Pancreas (tissue), 10 donors: ENCODE measurements at regions of chr6 and their contacts with region 1.

Region 1: GRCh38 chr6:110528101-110528929 is 51.9 kb upstream of the SLC22A16 start:
- DNase-seq: peak in 3 of 6 donors; percentile 9 to 58 (median 28)
- ATAC-seq: peak; percentile 68 to 94 (median 90)
- H3K4me3 ChIP-seq: no peak overlapping the region
- H3K27ac ChIP-seq: no peak overlapping the region
- H3K4me1 ChIP-seq: no peaks in the 10 kb centered on the region
- H3K27me3 ChIP-seq: no peaks in the 10 kb centered on the region
- CTCF ChIP-seq: peak; percentile 31 to 72 (median 57)

Region 2: DNA sequence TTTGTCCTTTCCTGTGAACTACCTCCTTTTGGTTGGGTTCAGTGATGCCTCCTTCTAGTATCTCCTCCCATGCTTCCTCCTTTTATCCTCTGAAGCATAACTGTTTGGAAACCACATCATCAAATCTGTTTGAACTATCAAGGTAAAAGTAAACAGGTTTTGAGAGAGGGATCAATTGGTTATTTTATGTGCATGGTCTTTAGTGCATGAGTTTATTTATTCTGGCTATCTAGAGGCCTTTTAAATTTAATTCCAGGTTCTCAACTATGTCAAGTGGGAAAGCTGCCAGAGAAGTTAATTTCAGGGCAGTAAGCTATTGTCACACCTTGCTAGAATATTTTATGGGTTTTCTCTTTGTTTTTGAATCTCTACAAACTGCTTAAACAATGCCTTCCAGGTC is 403.0 kb before region 1 on chr6:
- intact Hi-C with region 1: no loop called
- DNase-seq: no peak
- ATAC-seq: peak in 2 of 4 donors; percentile 9 to 36
- H3K4me3 ChIP-seq: no peak overlapping the region
- H3K27ac ChIP-seq: no peak overlapping the region
- H3K4me1 ChIP-seq: peaks cover 0 to 9% (median 0%) of the 10 kb centered on the region in 3 donors
- H3K27me3 ChIP-seq: no peaks in the 10 kb centered on the region
- CTCF ChIP-seq: no peak

Region 3: GRCh38 chr6:110682460-110682853 is 154.1 kb after region 1 on chr6:
- intact Hi-C with region 1: loop called in 1 of 3 experiments (anchors 10 kb)
- DNase-seq: peak in 3 of 6 donors; percentile 56 to 77 (median 67)
- ATAC-seq: peak; percentile 95 to 99 (median 99)
- H3K4me3 ChIP-seq: no peak overlapping the region
- H3K27ac ChIP-seq: no peak overlapping the region
- H3K4me1 ChIP-seq: peaks cover 0 to 3% (median 0%) of the 10 kb centered on the region in 3 donors
- H3K27me3 ChIP-seq: no peaks in the 10 kb centered on the region
- CTCF ChIP-seq: peak in 3 of 4 donors; percentile 20 to 63 (median 50)

Region 4: DNA sequence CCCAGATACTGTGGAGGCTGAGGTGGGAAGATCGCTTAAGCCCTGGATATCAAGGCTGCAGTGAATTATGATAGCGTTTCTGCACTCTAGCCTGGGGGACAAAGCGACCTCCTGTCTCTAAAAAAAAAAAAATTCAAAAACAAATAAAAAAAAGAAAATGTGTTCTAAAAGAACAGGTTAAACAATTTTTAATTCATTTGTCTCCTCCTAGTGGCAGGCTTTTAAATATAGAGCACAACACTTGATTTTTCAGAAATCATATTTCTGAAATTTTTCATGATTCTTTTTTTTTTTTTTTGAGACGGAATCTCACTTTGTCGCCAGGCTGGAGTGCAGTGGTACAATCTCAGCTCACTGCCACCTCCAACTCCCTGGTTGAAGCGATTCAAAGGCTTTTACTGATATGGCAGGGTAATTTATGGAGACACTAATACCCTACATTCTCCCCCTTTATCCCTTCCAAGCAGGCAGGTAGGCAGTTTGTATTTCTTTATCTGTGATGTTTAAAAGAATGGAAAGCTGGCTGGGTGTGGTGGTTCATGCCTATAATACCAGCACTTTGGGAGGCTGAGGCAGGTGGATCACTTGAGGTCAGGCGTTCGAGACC is 421.5 kb after region 1 on chr6:
- intact Hi-C with region 1: loop called in 1 of 3 experiments (anchors 5 kb)
- DNase-seq: no peak
- ATAC-seq: peak in 3 of 4 donors; percentile 48 to 54 (median 53)
- H3K4me3 ChIP-seq: no peak overlapping the region
- H3K27ac ChIP-seq: no peak overlapping the region
- H3K4me1 ChIP-seq: no peaks in the 10 kb centered on the region
- H3K27me3 ChIP-seq: no peaks in the 10 kb centered on the region
- CTCF ChIP-seq: peak in 3 of 4 donors; percentile 29 to 52 (median 30)